T-cell (primary cell): ENCODE measurements at regions of chr6 and their contacts with region 1.

Region 1: GRCh38 chr6:110873981-110874879 is at the start of gene AMD1:
- DNase-seq: peak; percentile 79 to 98 (median 95)
- ATAC-seq: peak; percentile 78 to 80 (median 78)
- H3K4me3 ChIP-seq: peak within 1 kb of the TSS; percentile 91 to 97
- H3K4me3 Mint-ChIP-seq: peak within 1 kb of the TSS; percentile 97 to 99 (median 98)
- H3K27ac ChIP-seq: peak within 1 kb of the TSS; percentile 89
- H3K27ac Mint-ChIP-seq: peak within 1 kb of the TSS; percentile 98
- H3K4me1 ChIP-seq: peaks cover 20 to 28% of the 10 kb centered on the region in 2 experiments
- H3K4me1 Mint-ChIP-seq: peaks cover 28 to 40% (median 32%) of the 10 kb centered on the region in 3 donors
- H3K27me3 ChIP-seq: no peaks in the 10 kb centered on the region
- H3K27me3 Mint-ChIP-seq: no peaks in the 10 kb centered on the region
- total RNA-seq, gene AMD1: 54.8 to 117 (median 57.6) TPM

Region 2: DNA sequence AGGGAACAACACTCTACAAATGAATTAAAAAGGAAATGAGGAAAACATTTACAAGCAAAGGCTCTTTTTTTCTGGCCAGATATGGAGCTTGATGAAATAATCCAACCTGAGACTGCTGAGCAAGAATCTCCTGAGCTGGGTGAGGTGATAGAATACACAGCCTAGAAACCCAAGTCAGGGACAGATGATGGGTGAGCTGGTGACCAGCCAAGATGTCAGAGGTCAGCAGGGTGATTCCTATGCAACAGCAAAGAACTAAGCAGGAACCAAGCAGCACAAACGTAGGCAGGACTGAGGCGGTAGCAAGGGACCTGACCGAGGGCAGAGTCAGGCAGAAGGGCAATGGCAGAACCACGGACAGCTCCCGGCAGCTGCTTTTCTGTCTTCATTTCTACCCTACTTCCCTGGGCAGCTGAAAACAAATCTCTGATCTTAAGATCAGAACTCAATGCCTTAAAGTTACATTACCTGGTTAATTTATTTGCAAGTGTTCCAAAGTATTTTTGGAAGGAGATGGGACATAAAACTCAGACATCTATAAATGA is 618.9 kb before region 1 on chr6:
- CTCF ChIA-PET with region 1: no interaction called
- POLR2A ChIA-PET with region 1: no interaction called
- DNase-seq: peak in 2 of 35 experiments; percentile 0 to 4
- ATAC-seq: no peak
- H3K4me3 ChIP-seq: no peak overlapping the region
- H3K4me3 Mint-ChIP-seq: no peak overlapping the region
- H3K27ac ChIP-seq: no peak overlapping the region
- H3K27ac Mint-ChIP-seq: no peak overlapping the region
- H3K4me1 ChIP-seq: no peaks in the 10 kb centered on the region
- H3K4me1 Mint-ChIP-seq: no peaks in the 10 kb centered on the region
- H3K27me3 ChIP-seq: peaks cover 0 to 3% of the 10 kb centered on the region in 2 experiments
- H3K27me3 Mint-ChIP-seq: peaks cover 9 to 16% of the 10 kb centered on the region in 2 donors

Region 3: GRCh38 chr6:110618591-110619267 is 255.5 kb before region 1 on chr6:
- CTCF ChIA-PET with region 1: no interaction called
- POLR2A ChIA-PET with region 1: no interaction called
- DNase-seq: no peak
- ATAC-seq: no peak
- H3K4me3 ChIP-seq: no peak overlapping the region
- H3K4me3 Mint-ChIP-seq: no peak overlapping the region
- H3K27ac ChIP-seq: no peak overlapping the region
- H3K27ac Mint-ChIP-seq: no peak overlapping the region
- H3K4me1 ChIP-seq: no peaks in the 10 kb centered on the region
- H3K4me1 Mint-ChIP-seq: peaks cover 0 to 2% (median 0%) of the 10 kb centered on the region in 3 donors
- H3K27me3 ChIP-seq: no peaks in the 10 kb centered on the region
- H3K27me3 Mint-ChIP-seq: no peaks in the 10 kb centered on the region

Region 4: GRCh38 chr6:110815217-110816109 is 58.8 kb before region 1 on chr6 and contains the start of gene CDK19:
- CTCF ChIA-PET with region 1: interaction called, 3 to 29 read pairs
- POLR2A ChIA-PET with region 1: interaction called, 69 to 311 read pairs
- DNase-seq: peak; percentile 96 to 99 (median 98)
- ATAC-seq: peak; percentile 84 to 88 (median 84)
- H3K4me3 ChIP-seq: peak within 1 kb of the TSS; percentile 75 to 94
- H3K4me3 Mint-ChIP-seq: peak within 1 kb of the TSS; percentile 94 to 99 (median 99)
- H3K27ac ChIP-seq: peak within 1 kb of the TSS; percentile 81
- H3K27ac Mint-ChIP-seq: peak within 1 kb of the TSS; percentile 97 to 99
- H3K4me1 ChIP-seq: peaks cover 11 to 15% of the 10 kb centered on the region in 2 experiments
- H3K4me1 Mint-ChIP-seq: peaks cover 20 to 33% (median 32%) of the 10 kb centered on the region in 3 donors
- H3K27me3 ChIP-seq: no peaks in the 10 kb centered on the region
- H3K27me3 Mint-ChIP-seq: no peaks in the 10 kb centered on the region
- total RNA-seq, gene CDK19: 11.4 to 16.1 (median 14.2) TPM

Region 5: DNA sequence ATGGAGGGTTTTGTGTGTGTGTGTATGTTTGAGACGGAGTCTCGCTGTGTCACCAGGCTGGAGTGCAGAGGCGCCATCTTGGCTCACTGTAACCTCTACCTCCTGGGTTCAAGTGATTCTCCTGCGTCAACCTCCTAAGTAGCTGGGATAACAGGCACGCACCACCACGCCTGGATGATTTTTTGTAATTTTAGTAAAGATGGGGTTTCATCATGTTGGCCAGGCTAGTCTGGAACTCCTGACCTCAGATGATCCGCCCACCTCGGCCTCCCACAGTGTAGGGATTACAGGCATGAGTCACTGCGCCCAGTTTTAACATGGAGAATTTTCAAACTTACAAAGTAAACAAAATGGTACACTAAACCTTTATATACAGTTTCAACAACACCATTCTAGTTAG is 23.2 kb after region 1 on chr6:
- CTCF ChIA-PET with region 1: interaction called in 1 of 2 experiments, 5 read pairs
- POLR2A ChIA-PET with region 1: interaction called in 1 of 2 experiments, 12 read pairs
- DNase-seq: no peak
- ATAC-seq: no peak
- H3K4me3 ChIP-seq: no peak overlapping the region
- H3K4me3 Mint-ChIP-seq: no peak overlapping the region
- H3K27ac ChIP-seq: no peak overlapping the region
- H3K27ac Mint-ChIP-seq: no peak overlapping the region
- H3K4me1 ChIP-seq: no peaks in the 10 kb centered on the region
- H3K4me1 Mint-ChIP-seq: peaks cover 0 to 1% (median 0%) of the 10 kb centered on the region in 3 donors
- H3K27me3 ChIP-seq: no peaks in the 10 kb centered on the region
- H3K27me3 Mint-ChIP-seq: no peaks in the 10 kb centered on the region

Region 6: GRCh38 chr6:110944681-110945151 is 70.5 kb after region 1 on chr6:
- CTCF ChIA-PET with region 1: interaction called, 3 to 4 read pairs
- POLR2A ChIA-PET with region 1: interaction called in 1 of 2 experiments, 13 read pairs
- DNase-seq: peak in 2 of 35 experiments; percentile 5 to 26
- ATAC-seq: peak; percentile 70 to 98 (median 92)
- H3K4me3 ChIP-seq: no peak overlapping the region
- H3K4me3 Mint-ChIP-seq: no peak overlapping the region
- H3K27ac ChIP-seq: no peak overlapping the region
- H3K27ac Mint-ChIP-seq: peak overlapping the region; percentile 39 to 66
- H3K4me1 ChIP-seq: no peaks in the 10 kb centered on the region
- H3K4me1 Mint-ChIP-seq: peaks cover 0 to 6% (median 3%) of the 10 kb centered on the region in 3 donors
- H3K27me3 ChIP-seq: no peaks in the 10 kb centered on the region
- H3K27me3 Mint-ChIP-seq: no peaks in the 10 kb centered on the region

Region 7: DNA sequence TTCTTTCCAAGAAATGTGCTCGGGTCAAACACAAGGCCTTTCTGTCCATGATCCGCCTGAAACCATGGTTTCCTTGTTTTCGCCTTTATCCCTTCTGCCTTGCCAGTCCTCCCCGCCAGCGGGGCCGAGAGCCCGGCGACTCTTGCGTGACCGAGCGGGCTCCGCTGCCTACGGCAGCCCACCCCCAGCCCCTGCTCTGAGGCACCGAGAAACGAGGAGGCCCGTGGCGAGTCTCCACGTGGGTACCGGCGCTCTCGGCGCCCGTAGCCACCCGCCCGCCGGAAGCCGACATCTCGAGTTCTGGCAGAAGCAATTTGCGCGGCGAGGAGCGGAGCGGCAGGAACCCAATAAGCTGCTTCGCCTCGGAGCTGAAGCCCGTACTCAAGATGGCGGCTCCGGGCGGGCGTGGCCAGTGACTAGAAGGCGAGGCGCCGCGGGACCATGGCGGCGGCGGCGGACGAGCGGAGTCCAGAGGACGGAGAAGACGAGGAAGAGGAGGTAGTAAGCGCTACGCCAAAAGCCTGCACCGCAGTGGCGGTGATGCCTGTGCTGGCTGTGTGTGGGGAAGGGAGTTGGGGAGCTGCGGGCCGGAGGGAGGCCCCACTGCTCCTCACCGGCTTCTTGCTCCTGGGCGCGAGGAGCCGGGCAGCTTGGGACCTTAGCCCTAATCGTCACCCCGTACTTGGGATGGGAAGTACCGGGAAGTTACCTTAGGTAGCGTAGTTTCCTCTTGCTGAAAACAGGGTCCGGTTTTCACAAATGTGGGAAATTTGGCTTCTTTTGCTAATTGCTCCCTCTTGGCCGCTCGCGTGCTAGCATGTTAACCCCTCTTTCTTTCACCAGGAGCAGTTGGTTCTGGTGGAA is 84.3 kb after region 1 on chr6 and contains the start of gene GTF3C6:
- CTCF ChIA-PET with region 1: interaction called in 1 of 2 experiments, 4 read pairs
- POLR2A ChIA-PET with region 1: interaction called, 10 to 29 read pairs
- DNase-seq: peak; percentile 78 to 96 (median 91)
- ATAC-seq: peak; percentile 99 to 100 (median 99)
- H3K4me3 ChIP-seq: peak within 1 kb of the TSS; percentile 88 to 98
- H3K4me3 Mint-ChIP-seq: peak within 1 kb of the TSS; percentile 90 to 97 (median 95)
- H3K27ac ChIP-seq: peak within 1 kb of the TSS; percentile 94
- H3K27ac Mint-ChIP-seq: peak within 1 kb of the TSS; percentile 92 to 99
- H3K4me1 ChIP-seq: peaks cover 7 to 16% of the 10 kb centered on the region in 2 experiments
- H3K4me1 Mint-ChIP-seq: peaks cover 14 to 22% (median 18%) of the 10 kb centered on the region in 3 donors
- H3K27me3 ChIP-seq: no peaks in the 10 kb centered on the region
- H3K27me3 Mint-ChIP-seq: no peaks in the 10 kb centered on the region
- total RNA-seq, gene GTF3C6: 21.4 to 33.9 (median 30.3) TPM